ENCODE measurements at regions of chr11 and their contacts with region 1.

Region 1: GRCh38 chr11:73177778-73178577 is 35.9 kb upstream of the FCHSD2 start:
- DNase-seq: peak; percentile 85 to 91 (median 89)
- ATAC-seq: peak; percentile 49 to 77 (median 65)
- H3K4me3 ChIP-seq: no peak overlapping the region
- H3K27ac ChIP-seq: peak overlapping the region; percentile 53 to 95 (median 83)
- H3K4me1 ChIP-seq: peaks cover 16 to 76% (median 44%) of the 10 kb centered on the region in 12 donors
- H3K27me3 ChIP-seq: no peaks in the 10 kb centered on the region
- CTCF ChIP-seq: peak; percentile 68 to 90 (median 83)
- POLR2A ChIP-seq: no peak

Region 2: GRCh38 chr11:72722050-72722748 is 455.8 kb before region 1 on chr11:
- intact Hi-C with region 1: loop called in 9 of 10 experiments (anchors 2 to 5 kb)
- DNase-seq: peak; percentile 91 to 94 (median 92)
- ATAC-seq: peak; percentile 79 to 84 (median 81)
- H3K4me3 ChIP-seq: peak overlapping the region; percentile 25 to 86 (median 71)
- H3K27ac ChIP-seq: peak overlapping the region; percentile 82 to 98 (median 92)
- H3K4me1 ChIP-seq: peaks cover 3 to 84% (median 47%) of the 10 kb centered on the region in 12 donors
- H3K27me3 ChIP-seq: no peaks in the 10 kb centered on the region
- CTCF ChIP-seq: no peak
- POLR2A ChIP-seq: peak in 1 of 2 donors; percentile 66

Region 3: DNA sequence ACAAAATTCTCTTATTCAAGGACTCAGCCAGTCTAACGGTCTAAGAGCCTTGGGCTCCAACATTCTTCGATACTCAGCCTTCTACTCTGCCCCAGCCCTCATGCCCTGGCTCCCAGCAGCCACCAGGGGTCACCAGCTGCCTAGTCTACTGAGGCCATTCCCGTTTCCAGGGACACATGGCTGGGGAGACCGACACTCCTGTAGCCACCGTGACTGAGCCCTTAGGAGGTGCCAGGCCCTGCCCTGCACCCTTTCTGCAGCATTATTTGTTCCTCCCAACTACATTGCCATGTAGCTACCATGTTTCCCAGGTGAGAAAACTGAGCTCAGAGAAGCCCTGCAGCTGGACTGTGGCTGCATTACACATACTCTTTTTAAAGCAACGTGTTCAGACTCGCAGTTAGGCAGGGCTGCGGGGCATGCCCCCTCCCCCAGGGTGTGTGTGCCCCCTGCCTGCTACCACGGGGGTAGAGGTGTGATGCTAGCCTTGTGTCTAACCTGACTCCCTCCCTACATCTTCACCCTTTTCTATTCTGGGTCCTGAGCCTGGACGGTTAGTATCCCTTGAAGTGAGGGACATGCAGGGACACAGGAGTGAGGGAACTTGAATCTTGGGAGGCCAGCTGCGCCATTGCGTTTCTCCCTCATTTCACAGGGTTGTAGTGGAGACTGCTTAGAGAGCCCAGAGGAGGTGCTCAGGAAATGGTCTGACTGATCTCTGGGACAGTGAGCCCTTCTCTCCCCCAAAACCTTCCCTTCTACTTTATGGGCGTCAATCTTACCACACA is 346.3 kb before region 1 on chr11:
- intact Hi-C with region 1: loop called (anchors 1 to 5 kb)
- DNase-seq: peak; percentile 85 to 91 (median 88)
- ATAC-seq: peak; percentile 73 to 81 (median 76)
- H3K4me3 ChIP-seq: no peak overlapping the region
- H3K27ac ChIP-seq: peak overlapping the region; percentile 80 to 98 (median 90)
- H3K4me1 ChIP-seq: peaks cover 39 to 85% (median 61%) of the 10 kb centered on the region in 12 donors
- H3K27me3 ChIP-seq: no peaks in the 10 kb centered on the region
- CTCF ChIP-seq: peak; percentile 91 to 99 (median 97)
- POLR2A ChIP-seq: no peak

Region 4: GRCh38 chr11:72924568-72925190 is 253.3 kb before region 1 on chr11:
- intact Hi-C with region 1: loop called (anchors 1 to 10 kb)
- DNase-seq: no peak
- ATAC-seq: peak in 3 of 4 donors; percentile 33 to 58 (median 52)
- H3K4me3 ChIP-seq: no peak overlapping the region
- H3K27ac ChIP-seq: peak overlapping the region in 1 of 12 donors; percentile 3
- H3K4me1 ChIP-seq: peaks cover 0 to 60% (median 25%) of the 10 kb centered on the region in 12 donors
- H3K27me3 ChIP-seq: no peaks in the 10 kb centered on the region
- CTCF ChIP-seq: peak; percentile 36 to 74 (median 59)
- POLR2A ChIP-seq: no peak

Region 5: GRCh38 chr11:73157053-73158010 is 20.6 kb before region 1 on chr11:
- intact Hi-C with region 1: loop called in 1 of 10 experiments (anchors 2 kb)
- DNase-seq: peak; percentile 76 to 89 (median 79)
- ATAC-seq: peak; percentile 81 to 89 (median 86)
- H3K4me3 ChIP-seq: no peak overlapping the region
- H3K27ac ChIP-seq: peak overlapping the region; percentile 69 to 96 (median 82)
- H3K4me1 ChIP-seq: peaks cover 0 to 79% (median 46%) of the 10 kb centered on the region in 12 donors
- H3K27me3 ChIP-seq: no peaks in the 10 kb centered on the region
- CTCF ChIP-seq: no peak
- POLR2A ChIP-seq: peak in 1 of 2 donors; percentile 36

Region 6: DNA sequence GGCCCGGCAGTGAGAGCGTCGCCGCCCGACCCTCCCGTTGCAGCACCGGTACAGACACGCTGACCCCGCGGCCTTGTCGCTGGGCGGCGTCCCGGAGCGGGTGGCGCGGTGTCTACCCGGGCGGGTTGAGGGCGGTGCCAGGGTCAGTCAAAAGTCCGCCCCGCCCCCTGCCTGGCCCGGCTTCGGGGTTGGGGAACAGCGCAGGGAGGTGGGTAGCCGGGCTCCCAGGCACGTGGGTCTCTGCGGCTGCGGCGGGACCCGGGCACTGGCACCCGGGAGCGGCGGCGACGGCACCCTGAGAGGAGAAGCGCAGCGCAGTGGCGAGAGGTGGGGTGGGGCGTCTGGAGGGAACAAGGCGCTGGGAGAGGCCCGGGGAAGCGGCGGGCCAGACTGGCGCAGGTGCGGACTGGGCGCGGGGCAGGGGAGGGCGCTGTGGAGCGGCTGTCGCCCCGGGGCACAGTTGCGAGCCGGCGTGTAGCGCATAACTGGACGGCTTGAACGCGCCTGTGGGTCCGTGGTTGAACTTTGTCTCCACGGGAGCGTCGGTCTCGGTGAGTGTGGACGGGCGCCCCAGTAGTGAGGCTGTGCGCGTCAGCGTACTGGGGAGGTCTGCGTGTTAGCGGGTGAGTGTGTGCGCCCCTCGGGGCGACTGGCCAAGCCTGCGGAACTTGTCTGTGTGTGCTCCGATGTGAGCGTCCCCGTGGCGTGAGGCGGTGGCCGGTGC is 40.3 kb after region 1 on chr11 and contains the start of gene P2RY2:
- intact Hi-C with region 1: no loop called
- DNase-seq: peak; percentile 85 to 93 (median 90)
- ATAC-seq: peak; percentile 72 to 90 (median 87)
- H3K4me3 ChIP-seq: peak within 1 kb of the TSS; percentile 47 to 70 (median 60)
- H3K27ac ChIP-seq: peak within 1 kb of the TSS; percentile 33 to 91 (median 84)
- H3K4me1 ChIP-seq: peaks cover 0 to 53% (median 26%) of the 10 kb centered on the region in 12 donors
- H3K27me3 ChIP-seq: no peaks in the 10 kb centered on the region
- CTCF ChIP-seq: peak; percentile 35 to 77 (median 58)
- POLR2A ChIP-seq: peak in 1 of 2 donors; percentile 51
- total RNA-seq, gene P2RY2: 10.2 to 28.3 (median 14.7) TPM

Region 7: GRCh38 chr11:73288873-73289707 is 111.1 kb after region 1 on chr11:
- intact Hi-C with region 1: no loop called
- DNase-seq: peak; percentile 78 to 88 (median 83)
- ATAC-seq: peak; percentile 57 to 84 (median 80)
- H3K4me3 ChIP-seq: peak overlapping the region in 9 of 12 donors; percentile 14 to 54 (median 41)
- H3K27ac ChIP-seq: peak overlapping the region in 11 of 12 donors; percentile 19 to 95 (median 58)
- H3K4me1 ChIP-seq: peaks cover 0 to 67% (median 29%) of the 10 kb centered on the region in 12 donors
- H3K27me3 ChIP-seq: no peaks in the 10 kb centered on the region
- CTCF ChIP-seq: peak; percentile 88 to 96 (median 92)
- POLR2A ChIP-seq: no peak

Region 8: DNA sequence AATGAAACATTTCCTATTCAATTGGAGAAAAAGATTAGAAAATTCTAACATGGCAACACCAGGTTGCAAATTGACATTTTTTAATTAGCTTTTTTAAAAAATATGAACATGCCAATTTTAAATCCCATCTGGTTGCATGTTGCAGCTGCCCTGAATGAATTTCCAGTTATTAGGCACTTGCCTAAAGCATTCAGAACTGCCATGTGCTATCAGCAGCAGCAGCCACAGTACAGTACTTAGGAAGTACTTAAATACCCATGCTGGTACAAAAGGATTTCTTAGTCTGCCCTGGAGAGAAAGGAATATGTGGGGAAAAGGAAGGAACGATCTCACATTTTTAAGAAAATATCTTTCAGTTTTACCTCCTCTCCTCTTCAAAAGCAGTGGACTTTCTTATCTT is 373.7 kb after region 1 on chr11:
- intact Hi-C with region 1: no loop called
- DNase-seq: no peak
- ATAC-seq: peak; percentile 67 to 75 (median 74)
- H3K4me3 ChIP-seq: no peak overlapping the region
- H3K27ac ChIP-seq: peak overlapping the region in 8 of 12 donors; percentile 17 to 56 (median 42)
- H3K4me1 ChIP-seq: peaks cover 0 to 52% (median 25%) of the 10 kb centered on the region in 12 donors
- H3K27me3 ChIP-seq: no peaks in the 10 kb centered on the region
- CTCF ChIP-seq: no peak
- POLR2A ChIP-seq: no peak

Measured in heart left ventricle (tissue), 16 donors.